Activated T-helper 2 cell treated with anti-CD3 and anti-CD28 coated beads, Interferon-gamma antibody, Interleukin-2, Interleukin-4, amounts not matched to agents 10 μg/mL and 5 μg/mL and 100 μg/mL, durations not matched to agents 14 hours and 24 hours and 36 hours (primary cell): ENCODE measurements at regions of chr1 and their contacts with region 1.

Region 1: GRCh38 chr1:10217748-10218441 is 7.5 kb downstream of the KIF1B start:
- DNase-seq: no peak
- H3K4me3 Mint-ChIP-seq: no peak overlapping the region
- H3K27ac Mint-ChIP-seq: peak overlapping the region; percentile 70
- H3K4me1 Mint-ChIP-seq: peaks cover 33% of the 10 kb centered on the region
- H3K27me3 Mint-ChIP-seq: no peaks in the 10 kb centered on the region

Region 2: GRCh38 chr1:9766759-9767442 is 451.0 kb before region 1 on chr1:
- intact Hi-C with region 1: no loop called
- DNase-seq: no peak
- H3K4me3 Mint-ChIP-seq: no peak overlapping the region
- H3K27ac Mint-ChIP-seq: no peak overlapping the region
- H3K4me1 Mint-ChIP-seq: no peaks in the 10 kb centered on the region
- H3K27me3 Mint-ChIP-seq: no peaks in the 10 kb centered on the region

Region 3: GRCh38 chr1:10253755-10254154 is 35.9 kb after region 1 on chr1:
- intact Hi-C with region 1: loop called (anchors 5 kb)
- DNase-seq: no peak
- H3K4me3 Mint-ChIP-seq: no peak overlapping the region
- H3K27ac Mint-ChIP-seq: no peak overlapping the region
- H3K4me1 Mint-ChIP-seq: peaks cover 11% of the 10 kb centered on the region
- H3K27me3 Mint-ChIP-seq: no peaks in the 10 kb centered on the region